ENCODE measurements at regions of chr20 and their contacts with region 1.

Region 1: GRCh38 chr20:16517946-16518783 is 55.1 kb downstream of the KIF16B start:
- DNase-seq: peak; percentile 19 to 51
- ATAC-seq: peak; percentile 96 to 99
- H3K4me3 ChIP-seq: no peak overlapping the region
- H3K27ac ChIP-seq: no peak overlapping the region
- H3K4me1 ChIP-seq: peaks cover 0 to 8% of the 10 kb centered on the region in 2 donors
- H3K27me3 ChIP-seq: no peaks in the 10 kb centered on the region
- CTCF ChIP-seq: peak; percentile 44 to 70 (median 67)
- POLR2A ChIP-seq: no peak

Region 2: DNA sequence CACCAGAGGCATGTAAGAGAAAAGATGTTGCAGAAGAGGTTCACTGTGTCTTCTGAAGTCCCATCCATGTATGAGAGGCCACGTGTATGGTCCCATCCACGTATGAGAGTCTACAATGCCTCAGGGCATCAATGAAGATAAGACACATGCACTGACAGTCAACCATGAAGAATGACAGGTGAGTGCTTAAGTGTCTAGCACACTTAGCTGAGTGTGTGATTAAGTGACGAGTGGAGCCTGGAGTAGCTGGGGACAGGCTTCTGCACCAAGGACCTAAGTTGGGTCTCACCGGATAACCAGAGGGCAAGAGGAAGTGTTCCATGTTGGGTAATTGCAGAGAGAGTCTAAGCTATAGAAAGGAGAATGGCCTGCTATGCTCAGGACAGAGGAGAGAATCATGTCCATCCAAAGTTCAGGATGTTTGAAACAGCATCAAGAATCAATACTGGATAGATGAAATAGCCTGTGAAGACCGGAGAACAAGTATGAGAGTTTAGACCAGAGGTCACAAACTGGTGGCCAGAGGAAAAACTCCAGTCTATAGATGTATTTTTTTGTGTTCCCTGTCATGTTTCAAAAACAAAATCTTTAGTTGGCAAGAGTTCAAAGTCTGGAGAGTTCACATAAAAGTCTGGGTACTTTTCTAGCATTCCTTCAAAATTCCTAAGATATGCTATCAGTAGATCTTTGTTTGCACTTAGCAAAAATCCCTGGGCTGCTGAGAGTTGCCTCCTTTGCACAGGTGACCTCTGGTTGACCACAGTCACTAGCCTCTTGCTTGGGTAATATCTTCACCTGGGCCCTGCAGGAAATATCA is 110.7 kb before region 1 on chr20:
- in situ Hi-C with region 1: no loop called
- intact Hi-C with region 1: no loop called
- DNase-seq: no peak
- ATAC-seq: no peak
- H3K4me3 ChIP-seq: no peak overlapping the region
- H3K27ac ChIP-seq: no peak overlapping the region
- H3K4me1 ChIP-seq: peaks cover 1 to 2% of the 10 kb centered on the region in 2 donors
- H3K27me3 ChIP-seq: no peaks in the 10 kb centered on the region
- CTCF ChIP-seq: no peak
- POLR2A ChIP-seq: no peak

Region 3: GRCh38 chr20:16601047-16601446 is 82.9 kb after region 1 on chr20:
- in situ Hi-C with region 1: no loop called
- intact Hi-C with region 1: no loop called
- DNase-seq: no peak
- ATAC-seq: no peak
- H3K4me3 ChIP-seq: no peak overlapping the region
- H3K27ac ChIP-seq: no peak overlapping the region
- H3K4me1 ChIP-seq: no peaks in the 10 kb centered on the region
- H3K27me3 ChIP-seq: no peaks in the 10 kb centered on the region
- CTCF ChIP-seq: no peak
- POLR2A ChIP-seq: no peak

Region 4: DNA sequence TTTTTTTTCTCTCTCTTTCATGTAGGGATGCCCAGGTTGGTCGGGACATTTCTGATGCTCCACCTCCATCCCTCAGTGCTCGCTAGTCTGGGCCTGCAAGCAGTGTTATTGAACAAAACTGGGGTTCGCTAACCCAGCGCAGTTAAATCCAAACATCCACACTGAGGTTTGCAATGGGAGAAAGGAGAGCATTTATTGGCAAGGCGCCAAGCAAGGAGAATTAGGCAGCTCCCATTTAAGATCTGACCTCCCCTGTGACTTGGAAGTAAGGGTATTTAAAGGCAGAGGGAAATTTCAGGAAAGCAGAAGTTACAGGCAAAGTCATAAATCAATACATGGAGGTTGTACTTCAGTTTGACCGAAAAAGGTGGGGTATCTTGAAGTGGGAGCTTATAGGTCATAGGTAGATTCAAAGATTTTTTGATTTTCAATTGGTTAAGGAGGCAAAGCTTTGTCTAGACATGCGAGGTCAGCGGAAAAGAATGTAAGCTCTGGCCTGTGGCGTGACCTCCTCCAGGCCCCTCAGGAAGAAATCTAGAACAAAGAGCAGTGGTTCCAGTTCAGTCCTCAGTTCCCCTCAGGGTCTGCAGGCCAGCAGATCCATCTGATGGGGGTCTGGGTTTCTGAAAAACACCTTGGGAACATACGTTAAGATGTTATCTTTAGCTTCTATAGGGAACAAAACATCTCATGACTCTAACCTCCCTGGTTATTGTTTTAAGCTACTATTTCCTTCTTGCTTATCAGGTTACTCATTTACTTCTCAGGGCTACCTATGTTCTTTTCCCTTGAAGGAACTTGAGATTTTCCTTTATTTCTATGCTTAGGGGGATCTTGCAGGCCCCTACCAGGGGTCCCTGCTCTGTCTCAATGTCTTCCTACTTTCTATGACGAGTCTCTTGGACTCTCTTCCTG is 121.1 kb after region 1 on chr20:
- in situ Hi-C with region 1: loop called in 1 of 4 experiments (anchors 5 kb)
- intact Hi-C with region 1: no loop called
- DNase-seq: no peak
- ATAC-seq: no peak
- H3K4me3 ChIP-seq: no peak overlapping the region
- H3K27ac ChIP-seq: no peak overlapping the region
- H3K4me1 ChIP-seq: no peaks in the 10 kb centered on the region
- H3K27me3 ChIP-seq: no peaks in the 10 kb centered on the region
- CTCF ChIP-seq: no peak
- POLR2A ChIP-seq: no peak

Region 5: GRCh38 chr20:16729565-16730456 is 211.6 kb after region 1 on chr20 and contains the start of gene SNRPB2:
- in situ Hi-C with region 1: loop called in 1 of 4 experiments (anchors 10 kb)
- intact Hi-C with region 1: loop called (anchors 10 kb)
- DNase-seq: peak; percentile 87 to 91
- ATAC-seq: peak; percentile 100
- H3K4me3 ChIP-seq: peak within 1 kb of the TSS; percentile 80 to 98 (median 96)
- H3K27ac ChIP-seq: peak within 1 kb of the TSS; percentile 76 to 86 (median 82)
- H3K4me1 ChIP-seq: peaks cover 17 to 18% of the 10 kb centered on the region in 2 donors
- H3K27me3 ChIP-seq: peaks cover 0 to 5% (median 0%) of the 10 kb centered on the region in 3 donors
- CTCF ChIP-seq: no peak
- POLR2A ChIP-seq: peak; percentile 49 to 57
- total RNA-seq, gene SNRPB2: 18.6 to 37.5 (median 31.7) TPM

Region 6: DNA sequence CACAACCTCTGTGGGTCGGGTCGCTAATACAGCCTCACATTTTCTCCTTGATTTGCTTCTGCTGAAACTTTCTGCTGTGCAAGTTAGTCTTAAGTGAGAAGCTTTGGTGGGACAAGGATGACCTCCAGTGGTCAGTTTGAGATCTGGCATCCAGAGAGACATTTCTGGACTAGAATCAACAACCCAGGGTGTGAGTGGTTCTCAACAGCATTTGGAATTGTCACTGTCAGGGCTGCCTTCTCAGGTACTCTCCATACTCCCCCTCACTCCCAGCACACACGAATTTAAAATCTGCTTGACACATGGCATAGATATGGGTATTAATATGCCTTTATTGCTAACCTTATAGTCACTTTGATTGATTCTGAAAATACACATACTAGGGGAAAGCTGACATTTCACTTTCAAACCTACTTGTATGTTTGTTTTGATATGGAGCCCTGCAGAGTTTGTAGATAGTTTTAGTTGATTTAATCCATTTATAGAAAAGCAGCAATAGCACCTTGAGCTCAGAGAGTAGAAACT is 243.2 kb after region 1 on chr20:
- in situ Hi-C with region 1: loop called in 2 of 4 experiments (anchors 10 to 25 kb)
- intact Hi-C with region 1: loop called (anchors 1 kb)
- DNase-seq: peak in 1 of 2 donors; percentile 26
- ATAC-seq: peak; percentile 70 to 91
- H3K4me3 ChIP-seq: no peak overlapping the region
- H3K27ac ChIP-seq: no peak overlapping the region
- H3K4me1 ChIP-seq: no peaks in the 10 kb centered on the region
- H3K27me3 ChIP-seq: no peaks in the 10 kb centered on the region
- CTCF ChIP-seq: peak; percentile 53 to 71 (median 64)
- POLR2A ChIP-seq: no peak

Measured in gastrocnemius medialis (tissue), 4 donors.